Posterior vena cava (tissue), 2 donors: ENCODE measurements at regions of chr1 and their contacts with region 1.

Region 1: DNA sequence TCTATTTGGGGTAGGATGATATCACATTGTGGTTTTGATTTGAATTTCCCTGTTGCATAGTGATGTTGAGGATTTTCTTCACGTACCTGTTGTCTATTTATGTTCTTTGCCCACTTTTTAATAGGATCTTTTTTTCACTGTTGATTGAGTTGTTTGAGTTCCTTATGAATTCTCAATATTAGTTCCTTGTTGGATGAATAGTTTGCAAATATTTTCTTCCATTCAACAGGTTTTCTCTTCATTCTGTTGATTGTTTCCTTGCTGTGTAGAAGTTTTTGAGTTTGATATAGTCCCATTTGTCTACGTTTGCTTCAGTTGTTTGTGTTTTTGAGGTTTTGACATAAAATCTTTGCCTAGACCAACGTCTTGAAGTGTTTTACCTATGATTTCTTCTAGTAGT is 369.5 kb upstream of the CAMK1G start:
- DNase-seq: no peak

Region 2: GRCh38 chr1:210262167-210262896 is 1048.3 kb after region 1 on chr1:
- intact Hi-C with region 1: loop called in 1 of 2 experiments (anchors 5 kb)
- DNase-seq: no peak